CD8-positive, alpha-beta T cell (primary cell): ENCODE measurements at regions of chr15 and their contacts with region 1.

Region 1: DNA sequence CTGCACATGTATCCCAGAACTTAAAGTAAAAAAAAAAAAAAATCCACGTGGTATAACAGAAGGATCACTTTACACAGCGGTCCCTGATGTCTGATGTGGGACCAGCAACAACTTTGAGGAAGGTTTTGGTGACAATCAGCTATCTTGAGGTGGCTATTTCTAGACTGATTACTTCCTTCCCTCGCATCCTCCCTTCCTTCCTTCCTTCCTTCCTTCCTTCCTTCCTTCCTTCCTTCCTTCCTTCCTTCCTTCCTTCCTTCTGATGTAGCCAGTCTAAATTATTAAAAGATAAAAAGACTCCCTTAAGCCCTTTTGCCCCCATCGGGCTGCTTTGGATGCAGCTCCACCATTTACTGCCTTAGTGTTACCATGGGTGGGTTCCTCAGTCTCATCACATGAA is 14.9 kb downstream of the SORD start:
- DNase-seq: no peak
- ATAC-seq: no peak
- H3K4me3 ChIP-seq: no peak overlapping the region
- H3K4me3 Mint-ChIP-seq: no peak overlapping the region
- H3K27ac ChIP-seq: no peak overlapping the region
- H3K27ac Mint-ChIP-seq: no peak overlapping the region
- H3K4me1 ChIP-seq: peaks cover 4% of the 10 kb centered on the region
- H3K4me1 Mint-ChIP-seq: peaks cover 16% of the 10 kb centered on the region
- H3K27me3 ChIP-seq: no peaks in the 10 kb centered on the region
- H3K27me3 Mint-ChIP-seq: no peaks in the 10 kb centered on the region
- CTCF ChIP-seq: no peak

Region 2: DNA sequence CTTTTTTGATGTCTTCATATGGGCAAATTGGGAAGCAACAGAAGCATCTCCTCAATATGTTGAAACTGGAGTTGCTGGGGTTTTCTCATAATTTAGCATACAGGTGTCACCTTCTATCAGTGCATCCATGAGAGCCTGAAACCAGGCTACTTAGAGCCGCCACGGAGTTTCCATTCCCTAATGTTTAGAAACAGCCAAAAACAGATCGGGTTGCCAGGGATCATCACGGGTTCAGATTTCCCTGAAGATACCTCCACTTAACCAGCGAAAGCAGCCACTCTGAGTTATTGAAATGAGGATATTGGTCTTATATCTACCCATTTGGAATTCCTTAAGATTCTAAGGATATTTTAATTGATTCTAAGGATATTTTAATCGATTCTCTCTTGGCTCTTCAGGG is 66.9 kb before region 1 on chr15:
- CTCF ChIA-PET with region 1: interaction called, 23 read pairs
- POLR2A ChIA-PET with region 1: no interaction called
- intact Hi-C with region 1: loop called (anchors 2 kb)
- DNase-seq: no peak
- ATAC-seq: no peak
- H3K4me3 ChIP-seq: no peak overlapping the region
- H3K4me3 Mint-ChIP-seq: no peak overlapping the region
- H3K27ac ChIP-seq: no peak overlapping the region
- H3K27ac Mint-ChIP-seq: no peak overlapping the region
- H3K4me1 ChIP-seq: no peaks in the 10 kb centered on the region
- H3K4me1 Mint-ChIP-seq: no peaks in the 10 kb centered on the region
- H3K27me3 ChIP-seq: no peaks in the 10 kb centered on the region
- H3K27me3 Mint-ChIP-seq: peaks cover 4% of the 10 kb centered on the region
- CTCF ChIP-seq: no peak